Vagina (tissue), 2 donors: ENCODE measurements at regions of chr4 and their contacts with region 1.

Region 1: DNA sequence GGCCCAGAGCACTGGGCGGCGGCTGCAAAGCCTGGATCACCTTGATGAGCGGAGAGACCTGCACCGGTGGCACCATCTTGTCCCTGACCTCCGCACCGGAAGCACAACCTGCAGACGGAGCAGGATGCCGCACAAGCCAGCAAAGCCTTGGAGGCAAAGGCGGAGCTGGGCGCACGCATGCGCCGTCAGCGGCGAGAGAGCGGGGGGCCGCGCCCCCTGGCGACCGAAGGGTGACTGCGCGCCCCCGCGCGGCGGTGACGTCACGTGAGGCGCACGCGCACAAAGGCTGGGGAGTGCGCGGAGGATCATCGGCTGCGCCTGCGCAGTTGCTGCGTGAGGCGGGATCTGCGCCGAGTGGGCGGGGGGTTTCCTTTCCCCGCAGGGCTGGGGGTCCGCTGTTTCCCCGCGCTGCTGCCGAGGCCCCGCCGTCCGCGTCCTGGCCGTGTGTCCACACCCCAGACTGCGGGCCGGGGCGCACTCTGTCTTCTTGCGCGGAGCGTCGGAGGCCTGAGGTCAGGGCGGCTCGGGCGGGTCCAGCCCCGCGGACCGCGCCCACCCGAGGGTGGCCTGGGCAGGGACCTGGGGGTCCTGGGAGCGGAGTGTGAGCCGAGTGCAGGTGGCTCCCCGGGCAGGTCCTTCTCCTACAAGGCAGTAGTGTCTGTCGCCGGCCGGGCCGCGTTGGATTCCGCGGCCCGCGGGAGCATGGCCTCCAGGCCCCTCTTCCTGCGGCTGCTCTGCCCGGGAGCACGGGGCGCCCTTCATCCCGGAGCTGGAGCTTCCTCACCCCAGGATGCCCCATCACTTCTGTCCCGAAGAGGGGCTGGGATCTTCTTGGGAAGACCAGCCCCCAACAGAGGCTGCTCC is at the starts of genes ATP5ME and MYL5:
- DNase-seq: peak in 1 of 2 donors; percentile 97
- H3K4me3 ChIP-seq: peak within 1 kb of the TSS; percentile 89 to 93
- H3K27ac ChIP-seq: peak within 1 kb of the TSS; percentile 96
- H3K4me1 ChIP-seq: peaks cover 33% of the 10 kb centered on the region
- H3K27me3 ChIP-seq: no peaks in the 10 kb centered on the region
- CTCF ChIP-seq: peak; percentile 67 to 80 (median 79)
- POLR2A ChIP-seq: peak in 1 of 2 donors; percentile 87
- total RNA-seq, gene ATP5ME: 181 TPM
- total RNA-seq, gene MYL5: 3.4 TPM

Region 2: DNA sequence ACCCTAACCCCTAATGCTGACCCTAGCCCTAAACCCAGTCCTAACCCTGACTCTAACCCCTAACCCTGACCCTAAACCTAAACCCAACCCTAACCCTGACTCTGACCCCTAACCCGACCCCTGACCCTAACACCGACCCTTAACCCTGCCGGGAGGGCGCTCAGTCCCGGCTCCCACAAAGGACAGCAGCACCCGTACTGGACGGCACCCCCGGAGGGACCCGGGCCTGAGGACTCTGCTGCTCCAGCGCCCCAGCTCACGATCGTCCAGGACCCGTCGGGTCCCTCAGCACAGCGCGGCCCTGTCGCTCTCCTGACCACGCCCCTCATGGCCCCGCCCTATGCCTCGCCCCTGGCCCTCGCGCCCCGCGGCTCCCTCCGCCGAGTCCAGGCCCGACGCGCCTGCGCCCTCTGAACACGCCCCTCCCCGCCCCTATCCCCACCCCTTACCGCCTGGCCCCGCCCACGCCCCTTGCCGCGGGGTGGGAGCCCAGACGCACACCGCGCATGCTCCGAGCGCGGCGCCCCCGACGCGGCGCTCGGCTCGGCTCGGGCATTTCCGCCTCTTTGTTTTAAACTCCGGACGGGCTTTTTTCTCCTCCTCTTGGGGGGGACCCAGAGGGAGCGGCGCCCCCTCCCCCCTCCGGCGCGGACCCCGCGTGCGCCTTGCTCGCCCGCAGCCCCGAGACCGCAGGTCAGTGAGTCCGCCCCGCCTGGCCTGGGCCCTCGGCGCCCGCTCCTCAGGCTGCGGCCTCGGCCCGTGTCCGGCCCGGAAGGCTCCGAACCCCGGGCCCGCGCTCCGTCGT is 31.1 kb after region 1 on chr4 and contains the start of gene PCGF3:
- intact Hi-C with region 1: loop called (anchors 2 kb)
- DNase-seq: peak in 1 of 2 donors; percentile 97
- H3K4me3 ChIP-seq: peak within 1 kb of the TSS; percentile 81 to 98
- H3K27ac ChIP-seq: peak within 1 kb of the TSS; percentile 90
- H3K4me1 ChIP-seq: peaks cover 41% of the 10 kb centered on the region
- H3K27me3 ChIP-seq: no peaks in the 10 kb centered on the region
- CTCF ChIP-seq: no peak
- POLR2A ChIP-seq: peak in 1 of 2 donors; percentile 42
- total RNA-seq, gene PCGF3: 64.8 TPM

Region 3: GRCh38 chr4:781493-782216 is 107.3 kb after region 1 on chr4:
- intact Hi-C with region 1: loop called (anchors 5 kb)
- DNase-seq: peak; percentile 99 to 100
- H3K4me3 ChIP-seq: peak overlapping the region; percentile 74 to 98
- H3K27ac ChIP-seq: peak overlapping the region; percentile 75
- H3K4me1 ChIP-seq: peaks cover 70% of the 10 kb centered on the region
- H3K27me3 ChIP-seq: peaks cover 3% of the 10 kb centered on the region
- CTCF ChIP-seq: no peak
- POLR2A ChIP-seq: peak in 1 of 2 donors; percentile 96

Region 4: GRCh38 chr4:804804-805203 is 130.4 kb after region 1 on chr4:
- intact Hi-C with region 1: no loop called
- DNase-seq: no peak
- H3K4me3 ChIP-seq: no peak overlapping the region
- H3K27ac ChIP-seq: no peak overlapping the region
- H3K4me1 ChIP-seq: no peaks in the 10 kb centered on the region
- H3K27me3 ChIP-seq: no peaks in the 10 kb centered on the region
- CTCF ChIP-seq: no peak
- POLR2A ChIP-seq: no peak